ENCODE measurements at regions of chr1 and their contacts with region 1.

Region 1: DNA sequence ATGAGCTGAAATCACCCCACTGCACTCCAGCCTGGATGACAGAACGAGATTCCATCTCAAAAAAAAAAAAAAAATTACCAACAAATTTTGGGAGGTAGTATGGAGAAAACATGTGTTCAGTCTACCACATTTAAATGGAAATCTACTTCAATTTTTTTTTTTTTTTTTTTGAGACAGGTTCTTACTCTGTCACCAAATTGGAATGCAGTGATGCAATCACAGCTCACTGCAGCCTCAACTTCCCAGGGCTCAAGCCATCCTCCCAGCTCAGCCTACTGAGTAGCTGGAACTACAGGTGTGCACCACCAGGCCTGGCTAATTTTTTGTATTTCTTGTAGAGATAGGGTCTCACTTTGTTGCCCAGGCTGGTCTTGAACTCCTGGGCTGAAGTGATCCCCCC is 82.1 kb downstream of the GFI1 start:
- DNase-seq: no peak

Region 2: GRCh38 chr1:92298573-92299476 is 105.8 kb before region 1 on chr1 and contains the starts of genes GLMN and RPAP2:
- intact Hi-C with region 1: no loop called
- DNase-seq: peak; percentile 92
- total RNA-seq, gene GLMN: 9.0 to 10.3 TPM
- total RNA-seq, gene RPAP2: 36.6 to 38.1 TPM

Region 3: GRCh38 chr1:92563457-92564216 is 159.0 kb after region 1 on chr1:
- intact Hi-C with region 1: no loop called
- DNase-seq: no peak

Region 4: GRCh38 chr1:93878889-93879586 is 1474.4 kb after region 1 on chr1 and contains the start of gene DNTTIP2:
- intact Hi-C with region 1: loop called in 1 of 2 experiments (anchors 10 kb)
- DNase-seq: peak; percentile 98
- total RNA-seq, gene DNTTIP2: 48.3 to 77.8 TPM